Mammary epithelial cell (primary cell): ENCODE measurements at regions of chr5 and their contacts with region 1.

Region 1: DNA sequence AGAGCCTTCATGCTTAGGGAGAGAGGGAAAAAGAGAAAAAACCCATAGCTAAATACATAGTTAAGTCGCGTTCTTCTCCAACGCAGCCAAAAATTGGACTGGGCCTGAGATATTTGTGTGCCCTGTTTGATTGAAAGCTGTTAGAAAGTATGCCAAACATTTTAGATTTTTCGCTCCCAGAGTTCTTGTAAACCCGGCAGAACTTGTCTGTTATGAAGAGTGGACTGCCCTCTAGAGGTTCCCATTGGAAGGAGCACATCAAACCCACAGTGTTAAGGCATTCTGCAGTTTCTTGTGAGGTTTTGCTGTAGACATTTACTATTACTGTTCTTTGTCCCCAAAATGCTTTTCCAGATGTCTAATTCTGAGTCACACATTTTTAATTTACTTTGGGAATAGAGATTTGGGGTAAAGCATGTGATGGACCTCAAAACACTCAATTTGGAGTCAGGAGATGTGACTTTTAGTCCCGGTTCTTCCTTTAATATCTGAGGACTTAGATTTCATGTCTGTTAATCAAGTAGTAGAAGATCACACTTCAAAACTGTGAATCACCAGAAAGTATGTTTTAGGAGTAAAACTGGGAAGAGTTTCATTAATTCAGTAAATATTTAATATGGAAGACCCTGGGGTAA is 96.6 kb downstream of the PCSK1 start:
- DNase-seq: peak; percentile 75
- H3K4me3 ChIP-seq: no peak overlapping the region
- H3K27ac ChIP-seq: peak overlapping the region; percentile 74
- H3K4me1 ChIP-seq: peaks cover 35% of the 10 kb centered on the region
- H3K27me3 ChIP-seq: no peaks in the 10 kb centered on the region
- CTCF ChIP-seq: peak; percentile 92 to 94

Region 2: DNA sequence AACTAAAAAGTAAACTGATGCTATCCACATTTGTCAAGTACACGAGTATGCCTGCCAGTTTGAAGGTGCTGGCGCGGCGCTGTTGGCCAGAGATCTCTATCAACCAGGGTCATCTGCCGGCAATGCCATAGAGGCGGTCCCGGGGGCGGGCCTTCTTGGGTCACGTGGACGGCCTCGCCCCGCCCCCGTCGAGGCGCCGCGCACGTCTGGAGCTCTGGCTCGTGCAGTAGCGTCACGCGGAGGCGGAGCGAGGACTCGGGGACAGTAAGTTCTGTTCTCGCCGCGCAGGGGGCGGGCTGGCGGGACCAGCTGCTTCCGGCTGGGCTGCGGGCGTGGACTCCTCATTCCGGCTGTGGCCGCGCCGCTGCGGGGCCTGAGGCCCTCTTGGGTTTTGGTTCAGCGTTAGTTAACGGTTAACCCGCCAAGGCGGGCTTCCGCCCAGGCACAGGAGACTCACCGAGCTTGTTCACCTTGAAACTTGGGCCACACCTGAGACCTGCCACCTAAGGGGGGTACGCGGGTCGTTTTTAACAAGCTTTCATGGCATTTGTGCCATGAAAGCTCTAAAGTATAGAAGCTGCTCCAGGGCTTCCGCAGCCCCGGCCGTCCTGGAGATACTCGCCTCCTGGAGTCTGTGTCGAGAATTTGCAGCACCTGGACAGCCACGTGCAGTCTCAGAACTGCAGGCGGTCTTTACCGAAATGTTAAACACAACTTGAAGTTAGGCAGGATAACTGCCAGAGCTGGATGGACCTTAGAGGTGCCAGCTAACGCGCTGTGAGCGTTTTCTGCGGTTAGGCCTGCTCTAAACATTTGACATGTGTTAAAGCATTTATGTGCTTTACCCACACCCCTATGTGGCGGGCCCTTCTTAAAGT is 689.7 kb before region 1 on chr5 and contains the start of gene RFESD:
- CTCF ChIA-PET with region 1: no interaction called
- dilution Hi-C with region 1: loop called (anchors 25 kb)
- in situ Hi-C with region 1: no loop called
- intact Hi-C with region 1: loop called (anchors 10 kb)
- DNase-seq: peak; percentile 91
- H3K4me3 ChIP-seq: peak within 1 kb of the TSS; percentile 37 to 59 (median 51)
- H3K27ac ChIP-seq: peak within 1 kb of the TSS; percentile 84
- H3K4me1 ChIP-seq: no peaks in the 10 kb centered on the region
- H3K27me3 ChIP-seq: no peaks in the 10 kb centered on the region
- CTCF ChIP-seq: peak in 1 of 2 donors; percentile 29
- total RNA-seq, gene RFESD: 2.1 to 3.0 TPM

Region 3: GRCh38 chr5:95858661-95859326 is 477.7 kb before region 1 on chr5:
- CTCF ChIA-PET with region 1: no interaction called
- dilution Hi-C with region 1: loop called (anchors 5 kb)
- in situ Hi-C with region 1: no loop called
- intact Hi-C with region 1: loop called (anchors 1 kb)
- DNase-seq: peak; percentile 97
- H3K4me3 ChIP-seq: peak overlapping the region; percentile 10 to 48 (median 31)
- H3K27ac ChIP-seq: peak overlapping the region; percentile 93
- H3K4me1 ChIP-seq: peaks cover 23% of the 10 kb centered on the region
- H3K27me3 ChIP-seq: no peaks in the 10 kb centered on the region
- CTCF ChIP-seq: peak; percentile 93 to 99

Region 4: GRCh38 chr5:96067894-96068614 is 268.4 kb before region 1 on chr5:
- CTCF ChIA-PET with region 1: no interaction called
- dilution Hi-C with region 1: no loop called
- in situ Hi-C with region 1: no loop called
- intact Hi-C with region 1: loop called (anchors 1 kb)
- DNase-seq: peak; percentile 94
- H3K4me3 ChIP-seq: no peak overlapping the region
- H3K27ac ChIP-seq: peak overlapping the region; percentile 89
- H3K4me1 ChIP-seq: peaks cover 46% of the 10 kb centered on the region
- H3K27me3 ChIP-seq: no peaks in the 10 kb centered on the region
- CTCF ChIP-seq: no peak

Region 5: DNA sequence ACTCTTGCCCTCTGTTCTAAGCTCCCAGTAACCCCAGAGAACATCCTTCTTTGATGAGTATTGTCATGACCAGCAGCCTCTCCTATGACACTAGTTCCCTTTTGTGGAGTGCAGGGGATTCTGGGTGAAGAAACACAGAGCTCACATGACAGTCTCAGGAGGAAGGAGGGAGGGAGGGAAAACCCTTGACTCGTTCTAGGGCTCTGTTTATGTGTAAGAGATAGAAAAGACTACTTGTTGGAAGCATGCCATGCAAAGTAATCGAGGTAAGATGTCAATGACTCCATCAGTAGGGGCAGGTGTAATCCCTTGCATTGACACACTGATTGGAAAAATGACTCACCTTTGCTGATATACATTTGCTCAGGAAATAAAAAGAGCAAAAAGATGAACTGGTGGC is 184.6 kb before region 1 on chr5:
- CTCF ChIA-PET with region 1: no interaction called
- dilution Hi-C with region 1: no loop called
- in situ Hi-C with region 1: no loop called
- intact Hi-C with region 1: loop called (anchors 2 kb)
- DNase-seq: no peak
- H3K4me3 ChIP-seq: no peak overlapping the region
- H3K27ac ChIP-seq: no peak overlapping the region
- H3K4me1 ChIP-seq: peaks cover 52% of the 10 kb centered on the region
- H3K27me3 ChIP-seq: no peaks in the 10 kb centered on the region
- CTCF ChIP-seq: no peak

Region 6: GRCh38 chr5:96226941-96227552 is 109.4 kb before region 1 on chr5:
- CTCF ChIA-PET with region 1: no interaction called
- dilution Hi-C with region 1: no loop called
- in situ Hi-C with region 1: no loop called
- intact Hi-C with region 1: loop called (anchors 1 kb)
- DNase-seq: peak; percentile 89
- H3K4me3 ChIP-seq: peak overlapping the region in 1 of 3 experiments; percentile 5
- H3K27ac ChIP-seq: peak overlapping the region; percentile 96
- H3K4me1 ChIP-seq: peaks cover 30% of the 10 kb centered on the region
- H3K27me3 ChIP-seq: no peaks in the 10 kb centered on the region
- CTCF ChIP-seq: no peak

Region 7: DNA sequence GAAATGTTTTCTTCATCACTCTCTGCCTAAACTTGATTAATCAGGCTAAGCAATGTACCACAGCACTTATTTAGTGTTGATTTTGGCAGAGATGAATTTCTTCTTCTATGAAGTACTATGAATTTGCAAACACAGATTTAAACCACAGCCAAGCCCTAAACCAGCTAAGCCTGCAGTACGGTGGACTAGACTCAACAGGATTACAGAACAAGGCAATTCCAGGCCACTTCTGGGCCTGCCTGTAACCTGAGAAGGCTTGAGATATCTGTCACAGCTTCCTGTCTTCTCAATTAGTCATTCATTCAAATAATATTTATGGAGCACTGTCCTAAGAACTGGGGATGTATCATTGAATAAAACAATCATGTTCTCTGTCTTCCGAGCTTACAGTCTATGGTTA is 293.3 kb after region 1 on chr5:
- CTCF ChIA-PET with region 1: no interaction called
- dilution Hi-C with region 1: no loop called
- in situ Hi-C with region 1: no loop called
- intact Hi-C with region 1: no loop called
- DNase-seq: peak; percentile 99
- H3K4me3 ChIP-seq: no peak overlapping the region
- H3K27ac ChIP-seq: peak overlapping the region; percentile 84
- H3K4me1 ChIP-seq: peaks cover 59% of the 10 kb centered on the region
- H3K27me3 ChIP-seq: no peaks in the 10 kb centered on the region
- CTCF ChIP-seq: no peak